ENCODE measurements at regions of chr12 and their contacts with region 1.

Region 1: DNA sequence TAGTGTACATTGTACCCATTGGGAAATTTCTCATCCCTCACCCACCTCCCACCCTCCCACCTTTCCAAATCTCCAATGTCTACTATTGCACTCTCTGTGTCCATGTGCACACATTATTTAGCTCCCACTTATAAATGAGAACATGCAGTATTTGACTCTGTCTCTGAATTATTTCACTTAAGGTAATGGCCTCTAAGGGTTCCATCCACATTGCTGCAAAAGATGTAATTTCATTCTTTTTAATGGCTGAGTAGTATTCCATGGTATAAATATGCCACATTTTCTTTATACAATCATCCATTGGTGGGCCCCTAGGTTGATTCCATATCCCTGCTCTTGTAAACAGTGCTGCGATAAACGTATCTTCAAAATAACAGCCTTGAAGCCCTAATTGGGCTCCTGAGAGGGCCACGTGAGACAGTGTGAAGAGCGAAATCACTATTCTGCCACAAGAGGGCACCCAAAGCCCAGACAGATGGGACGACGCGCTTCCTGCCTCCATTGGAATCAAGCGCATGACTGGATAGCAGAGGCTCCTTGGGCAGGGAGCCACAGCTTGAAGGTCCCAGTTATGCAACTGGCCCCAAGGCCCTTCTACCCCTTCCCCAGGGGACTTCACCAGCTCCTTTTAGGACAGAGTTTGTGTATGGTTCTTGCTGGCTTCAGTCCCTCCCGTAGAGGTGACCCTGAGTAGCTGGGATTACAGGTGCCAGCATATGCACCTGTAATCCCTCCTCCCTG is 21.3 kb upstream of the CD27 start:
- DNase-seq: peak; percentile 87 to 96
- H3K4me3 ChIP-seq: no peak overlapping the region
- CTCF ChIP-seq: peak in 1 of 3 donors; percentile 56
- POLR2A ChIP-seq: no peak

Region 2: DNA sequence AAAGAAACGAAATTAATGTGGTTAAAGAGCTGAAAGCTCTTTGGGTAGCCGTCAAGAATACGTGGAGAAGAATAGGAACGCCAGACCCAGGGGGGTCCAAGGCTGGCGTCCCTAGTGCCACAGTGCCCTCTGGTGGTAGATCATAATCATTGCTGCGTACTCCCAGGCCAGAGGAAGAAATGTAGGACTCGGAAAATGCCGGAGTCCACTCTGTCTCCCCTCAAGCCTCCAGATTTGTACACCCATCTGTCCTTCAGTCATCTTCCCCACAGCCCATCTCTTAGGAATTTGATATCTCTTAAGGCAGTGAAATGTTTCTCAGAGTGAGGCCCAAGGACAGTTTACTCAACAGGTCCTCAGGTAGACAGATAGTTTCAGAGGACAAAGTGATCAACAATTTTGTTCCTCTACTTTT is 138.4 kb before region 1 on chr12:
- intact Hi-C with region 1: no loop called
- DNase-seq: no peak
- H3K4me3 ChIP-seq: no peak overlapping the region
- CTCF ChIP-seq: peak in 1 of 3 donors; percentile 94
- POLR2A ChIP-seq: no peak

Region 3: GRCh38 chr12:6465467-6466183 is 42.2 kb after region 1 on chr12:
- intact Hi-C with region 1: loop called (anchors 5 kb)
- DNase-seq: peak; percentile 70 to 81
- H3K4me3 ChIP-seq: no peak overlapping the region
- CTCF ChIP-seq: peak in 1 of 3 donors; percentile 84
- POLR2A ChIP-seq: no peak

Region 4: DNA sequence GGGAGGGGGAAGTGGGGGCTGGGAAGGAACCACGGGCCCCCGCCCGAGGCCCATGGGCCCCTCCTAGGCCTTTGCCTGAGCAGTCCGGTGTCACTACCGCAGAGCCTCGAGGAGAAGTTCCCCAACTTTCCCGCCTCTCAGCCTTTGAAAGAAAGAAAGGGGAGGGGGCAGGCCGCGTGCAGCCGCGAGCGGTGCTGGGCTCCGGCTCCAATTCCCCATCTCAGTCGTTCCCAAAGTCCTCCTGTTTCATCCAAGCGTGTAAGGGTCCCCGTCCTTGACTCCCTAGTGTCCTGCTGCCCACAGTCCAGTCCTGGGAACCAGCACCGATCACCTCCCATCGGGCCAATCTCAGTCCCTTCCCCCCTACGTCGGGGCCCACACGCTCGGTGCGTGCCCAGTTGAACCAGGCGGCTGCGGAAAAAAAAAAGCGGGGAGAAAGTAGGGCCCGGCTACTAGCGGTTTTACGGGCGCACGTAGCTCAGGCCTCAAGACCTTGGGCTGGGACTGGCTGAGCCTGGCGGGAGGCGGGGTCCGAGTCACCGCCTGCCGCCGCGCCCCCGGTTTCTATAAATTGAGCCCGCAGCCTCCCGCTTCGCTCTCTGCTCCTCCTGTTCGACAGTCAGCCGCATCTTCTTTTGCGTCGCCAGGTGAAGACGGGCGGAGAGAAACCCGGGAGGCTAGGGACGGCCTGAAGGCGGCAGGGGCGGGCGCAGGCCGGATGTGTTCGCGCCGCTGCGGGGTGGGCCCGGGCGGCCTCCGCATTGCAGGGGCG is 110.7 kb after region 1 on chr12 and contains the start of gene GAPDH:
- intact Hi-C with region 1: loop called (anchors 5 kb)
- DNase-seq: peak; percentile 86 to 97
- H3K4me3 ChIP-seq: peak within 1 kb of the TSS; percentile 86
- CTCF ChIP-seq: no peak
- POLR2A ChIP-seq: peak in 1 of 2 donors; percentile 57
- total RNA-seq, gene GAPDH: 1,190 to 2,139 (median 1,514) TPM

Region 5: DNA sequence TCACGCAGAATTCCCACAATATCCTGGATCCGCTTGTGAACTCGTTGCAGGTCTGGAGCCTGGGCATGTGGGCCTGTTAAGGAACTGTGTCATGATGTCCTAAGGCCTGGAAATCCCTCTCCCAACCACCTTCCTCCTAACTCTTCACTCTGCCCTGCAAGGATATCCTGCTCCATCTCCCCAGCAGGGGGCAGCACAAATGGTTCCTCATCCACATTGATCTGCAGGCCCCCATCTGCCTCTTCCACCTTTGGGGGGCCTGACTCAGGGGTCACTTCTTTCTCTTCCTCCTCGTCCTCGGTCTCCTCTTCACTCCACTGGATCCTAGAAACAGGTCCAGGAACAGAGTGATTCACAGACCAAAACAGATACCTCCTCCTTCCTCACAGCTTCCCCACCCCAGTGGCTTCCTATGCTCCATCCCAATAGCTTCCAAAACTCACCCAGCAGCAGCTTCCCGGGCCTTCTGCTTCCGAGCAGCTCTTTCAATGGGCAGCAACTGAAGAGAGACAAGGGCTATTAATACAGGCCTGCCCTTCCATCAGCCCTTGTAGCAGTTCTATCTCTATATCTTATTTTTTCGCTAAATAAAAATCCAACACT is 140.1 kb after region 1 on chr12:
- intact Hi-C with region 1: no loop called
- DNase-seq: peak in 1 of 2 donors; percentile 89
- H3K4me3 ChIP-seq: no peak overlapping the region
- CTCF ChIP-seq: peak in 1 of 3 donors; percentile 47
- POLR2A ChIP-seq: no peak

Region 6: DNA sequence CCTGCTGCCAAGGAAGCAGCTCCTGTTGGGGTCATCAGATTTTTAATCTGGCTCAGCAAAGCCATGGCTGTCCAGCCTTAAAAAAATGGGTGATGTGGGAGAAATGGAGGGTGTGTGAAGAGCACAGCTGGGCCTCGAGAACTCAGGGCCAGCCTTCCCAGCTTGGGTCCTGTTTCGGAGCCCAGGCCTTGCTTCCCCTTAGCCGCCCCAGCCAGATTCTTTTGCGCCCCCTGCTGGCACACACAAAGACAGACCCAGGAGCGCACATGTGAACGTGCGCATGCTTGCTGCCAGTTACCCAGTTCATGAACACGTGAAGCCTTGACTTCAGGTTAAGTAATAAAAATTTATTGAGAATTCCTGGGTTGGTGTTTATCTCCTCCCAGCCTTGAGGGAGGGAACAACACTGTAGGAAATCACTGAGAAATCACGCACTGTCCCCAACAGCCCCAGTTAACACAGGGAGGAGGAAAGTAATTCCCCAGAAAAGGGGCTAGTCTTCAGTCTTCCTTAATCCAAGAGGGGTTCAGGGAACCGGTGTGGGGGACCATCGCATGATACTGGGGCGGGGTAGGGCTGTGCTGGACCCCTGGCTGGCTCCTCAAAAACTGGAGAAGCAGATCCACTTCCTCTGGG is 541.7 kb after region 1 on chr12:
- intact Hi-C with region 1: no loop called
- DNase-seq: peak; percentile 85 to 97
- H3K4me3 ChIP-seq: no peak overlapping the region
- CTCF ChIP-seq: peak in 1 of 3 donors; percentile 94
- POLR2A ChIP-seq: no peak

Measured in lower leg skin (tissue), 4 donors.